ENCODE measurements at regions of chr10 and their contacts with region 1.

Region 1: DNA sequence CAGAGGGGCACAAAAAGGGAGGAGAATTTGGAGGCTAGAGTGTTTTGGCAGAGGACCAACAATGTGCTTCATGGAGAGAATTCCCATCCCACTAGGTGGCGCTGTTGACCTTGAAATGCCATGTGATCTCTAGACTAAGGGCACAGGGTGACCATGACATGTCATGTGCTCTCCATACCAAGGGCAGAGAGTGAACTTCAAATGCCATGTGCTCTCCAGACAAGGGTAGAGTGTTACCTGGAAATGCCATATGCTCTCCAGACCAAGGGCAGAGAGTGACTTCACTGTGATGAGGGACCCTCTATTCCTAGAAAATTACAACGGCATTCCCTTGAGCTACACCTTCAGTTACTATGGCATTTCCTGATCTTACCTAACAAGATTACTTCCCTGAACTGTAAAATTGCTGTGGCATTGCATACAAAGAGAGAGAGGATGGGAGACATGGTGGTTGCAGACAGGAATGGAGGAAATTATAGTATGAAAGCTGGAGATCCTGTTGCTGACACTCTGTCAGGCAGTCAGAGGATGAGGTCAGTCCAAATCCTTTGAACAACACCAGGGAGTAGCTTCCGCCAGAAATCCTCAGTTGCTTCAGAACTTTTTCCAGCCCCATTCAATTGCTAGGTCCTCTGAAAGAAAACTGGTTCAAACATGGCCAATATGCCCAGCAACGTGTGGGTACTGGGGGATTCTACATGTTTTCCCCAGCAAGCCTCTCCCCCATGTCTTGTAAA is 60.9 kb upstream of the ACSM6 start:
- DNase-seq: peak; percentile 88
- H3K4me3 Mint-ChIP-seq: no peak overlapping the region
- H3K27ac Mint-ChIP-seq: no peak overlapping the region
- H3K4me1 Mint-ChIP-seq: no peaks in the 10 kb centered on the region
- H3K27me3 Mint-ChIP-seq: no peaks in the 10 kb centered on the region

Region 2: DNA sequence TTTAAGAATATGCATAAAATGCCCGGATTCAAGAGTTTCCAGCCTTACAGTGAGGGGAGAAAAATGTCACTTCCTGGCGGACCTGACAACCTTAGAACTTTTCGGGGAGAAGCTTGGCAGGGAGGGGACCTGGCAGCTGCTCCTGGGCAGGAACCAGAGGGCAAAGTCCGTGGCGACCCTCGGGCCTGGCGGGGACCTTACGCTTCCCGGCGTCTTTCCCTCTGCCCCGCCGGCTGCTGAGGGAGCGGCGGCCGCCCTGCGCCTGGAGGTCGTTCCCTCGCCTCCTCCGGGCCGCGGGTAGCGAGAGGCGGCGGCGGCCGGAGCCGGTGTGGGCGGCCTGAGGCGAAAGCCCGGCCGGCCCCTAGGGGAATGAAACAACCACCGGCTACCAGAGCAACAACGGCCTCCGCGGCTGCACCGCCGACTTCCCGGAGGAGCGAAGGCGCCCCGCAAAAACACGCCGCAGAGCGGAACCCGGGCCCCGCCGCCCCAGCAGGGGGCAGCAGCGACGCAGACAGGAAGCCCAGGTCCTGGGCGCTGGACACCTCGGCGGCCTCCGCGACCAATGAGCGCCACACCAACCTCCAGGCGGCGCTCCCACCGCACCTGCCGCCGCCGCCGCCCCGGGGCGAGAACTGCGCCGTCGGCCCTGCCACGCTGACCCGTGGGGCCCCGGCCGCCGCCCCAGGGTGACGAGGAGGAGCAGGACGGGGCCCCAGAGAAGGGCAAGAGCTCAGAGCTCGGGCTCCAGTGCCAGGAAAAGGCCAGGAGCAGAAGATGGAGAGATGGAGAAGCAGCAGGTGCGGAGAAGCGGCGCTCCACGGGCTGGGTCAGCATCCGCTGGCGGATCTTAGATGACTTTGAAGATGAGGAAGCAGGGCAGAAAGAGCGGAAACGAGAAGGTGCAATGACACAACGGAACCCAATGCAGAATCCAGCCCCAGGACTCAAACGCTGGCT is 50.4 kb after region 1 on chr10:
- CTCF ChIA-PET with region 1: no interaction called
- intact Hi-C with region 1: loop called (anchors 2 kb)
- DNase-seq: peak; percentile 74
- H3K4me3 Mint-ChIP-seq: peak overlapping the region; percentile 61
- H3K27ac Mint-ChIP-seq: no peak overlapping the region
- H3K4me1 Mint-ChIP-seq: peaks cover 3% of the 10 kb centered on the region
- H3K27me3 Mint-ChIP-seq: peaks cover 29% of the 10 kb centered on the region

Region 3: DNA sequence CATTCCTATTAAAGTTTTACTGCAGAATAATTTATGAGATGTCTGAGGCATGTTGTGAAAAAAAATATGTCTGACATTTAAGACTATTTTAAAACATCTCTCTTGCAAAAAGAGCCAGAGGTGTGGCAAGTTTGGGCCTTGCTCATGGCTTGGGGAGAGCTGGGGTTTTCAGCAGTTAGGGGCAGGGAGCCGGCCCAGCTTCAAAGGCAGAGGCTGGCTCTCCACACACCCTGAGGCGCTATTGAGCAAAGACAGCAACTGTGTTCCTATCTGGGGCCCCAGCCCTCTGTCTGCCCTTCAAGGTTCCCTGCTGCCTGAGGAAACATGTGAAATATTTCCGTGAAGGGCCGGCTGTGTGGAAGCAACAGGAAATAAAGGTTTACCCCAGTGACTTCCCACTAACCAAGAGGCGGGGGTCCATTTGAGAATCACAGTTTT is 334.0 kb after region 1 on chr10:
- CTCF ChIA-PET with region 1: no interaction called
- intact Hi-C with region 1: no loop called
- DNase-seq: peak; percentile 5
- H3K4me3 Mint-ChIP-seq: no peak overlapping the region
- H3K27ac Mint-ChIP-seq: no peak overlapping the region
- H3K4me1 Mint-ChIP-seq: peaks cover 2% of the 10 kb centered on the region
- H3K27me3 Mint-ChIP-seq: no peaks in the 10 kb centered on the region

Region 4: DNA sequence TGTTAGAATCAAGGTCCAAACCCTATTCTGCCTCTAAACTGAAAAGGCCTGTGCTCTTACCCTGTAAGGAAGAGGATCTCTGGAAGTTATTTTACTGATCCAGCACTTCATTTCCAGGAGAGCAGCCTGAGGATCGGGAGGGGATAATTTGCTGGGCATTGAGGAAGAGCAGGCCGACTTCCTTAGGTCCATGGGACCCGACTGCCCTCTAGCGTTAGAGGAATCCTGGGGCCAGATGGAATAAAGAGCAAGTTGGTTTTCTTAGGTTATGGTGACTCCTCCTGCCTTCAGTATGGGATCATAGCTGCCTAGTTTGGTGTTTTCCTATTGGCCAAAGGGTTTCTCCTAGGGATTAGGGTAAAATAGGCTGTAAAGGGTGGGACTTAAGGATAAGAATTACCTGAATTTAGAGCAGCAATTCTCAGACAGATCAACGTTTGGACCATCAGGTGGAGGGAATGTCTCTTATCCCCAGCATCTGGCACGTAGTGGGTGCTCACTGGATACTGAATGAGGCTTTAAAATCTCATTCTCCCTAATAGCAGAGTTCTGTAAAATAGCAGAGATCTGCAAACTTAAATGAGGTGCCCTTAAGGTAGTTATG is 468.0 kb after region 1 on chr10:
- CTCF ChIA-PET with region 1: no interaction called
- intact Hi-C with region 1: loop called (anchors 2 kb)
- DNase-seq: peak; percentile 68
- H3K4me3 Mint-ChIP-seq: no peak overlapping the region
- H3K27ac Mint-ChIP-seq: no peak overlapping the region
- H3K4me1 Mint-ChIP-seq: no peaks in the 10 kb centered on the region
- H3K27me3 Mint-ChIP-seq: no peaks in the 10 kb centered on the region